Esophagus squamous epithelium (tissue), 5 donors: ENCODE measurements at regions of chr3 and their contacts with region 1.

Region 1: DNA sequence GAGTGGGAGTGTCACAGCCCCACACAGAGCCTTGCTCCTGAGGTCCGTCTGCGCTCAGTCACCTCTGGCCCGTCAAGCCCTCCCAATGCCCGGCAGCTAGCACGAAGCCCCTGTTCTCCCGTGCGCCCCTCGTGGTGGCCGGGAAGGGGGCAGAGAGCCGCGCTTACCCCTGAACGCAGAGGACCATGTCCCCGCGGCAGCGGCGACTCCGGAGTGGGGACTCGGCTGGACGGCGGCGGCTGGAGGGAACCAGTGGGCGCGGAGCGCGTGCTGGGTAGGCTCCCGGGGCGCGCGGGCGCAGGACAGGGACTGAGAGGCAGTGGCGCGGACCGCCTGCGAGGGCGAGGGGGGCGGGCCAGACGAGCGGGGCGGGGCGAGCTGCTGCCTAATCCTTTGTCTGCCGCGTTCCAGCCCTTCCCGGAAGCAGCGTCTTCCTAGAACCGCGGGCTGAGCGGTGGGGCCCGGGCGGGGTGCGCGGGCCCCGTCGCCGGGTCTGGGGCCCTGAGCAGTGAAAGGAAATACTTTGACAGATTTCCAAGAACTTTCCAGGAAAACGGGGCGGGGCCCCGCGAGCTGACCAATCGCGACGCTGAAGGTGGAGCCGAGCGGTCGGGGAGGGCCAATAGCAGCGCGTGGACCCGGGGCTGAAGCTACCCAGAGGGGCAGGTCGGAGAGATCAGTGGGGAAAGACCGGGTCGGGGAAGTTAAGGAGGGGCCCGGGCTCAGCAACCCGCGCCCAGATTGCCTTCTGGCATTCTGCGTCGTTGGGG is at the start of gene CISH:
- DNase-seq: peak; percentile 90
- H3K4me3 ChIP-seq: peak within 1 kb of the TSS; percentile 56 to 85 (median 76)
- H3K27ac ChIP-seq: peak within 1 kb of the TSS; percentile 83 to 93 (median 90)
- H3K4me1 ChIP-seq: peaks cover 21 to 88% (median 52%) of the 10 kb centered on the region in 3 donors
- H3K27me3 ChIP-seq: no peaks in the 10 kb centered on the region
- CTCF ChIP-seq: peak in 3 of 6 experiments; percentile 10 to 47 (median 30)
- POLR2A ChIP-seq: peak in 2 of 4 donors; percentile 61 to 88
- total RNA-seq, gene CISH: 3.1 to 11.1 (median 6.8) TPM

Region 2: DNA sequence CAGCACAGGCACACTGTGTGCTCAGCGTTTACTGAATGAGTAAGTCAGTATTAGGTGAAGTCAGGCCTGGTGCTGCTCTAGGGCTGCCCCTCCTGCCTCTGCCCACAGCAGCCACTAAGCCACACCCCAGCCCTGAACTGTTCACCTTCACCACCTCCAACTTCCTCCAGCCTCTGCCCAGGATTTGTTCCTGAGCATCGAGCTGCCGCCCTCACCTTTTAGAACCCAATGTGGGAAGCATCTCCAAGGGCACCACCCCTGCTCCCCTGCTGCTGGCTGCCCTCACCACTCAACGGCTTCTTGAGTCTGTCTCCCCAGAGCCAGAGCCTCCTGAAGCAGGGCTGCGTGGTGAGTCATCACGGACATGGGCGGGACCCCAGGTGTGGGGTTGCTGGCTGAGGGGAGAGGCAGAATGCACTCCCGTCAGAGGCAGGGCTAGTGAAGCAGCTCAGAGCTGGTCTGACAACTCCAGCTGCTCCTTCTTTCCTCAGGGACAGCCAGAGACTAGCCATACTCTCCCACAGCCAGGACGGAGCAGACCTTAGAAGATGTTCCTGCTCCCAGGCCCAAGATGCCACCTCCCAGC is 294.9 kb before region 1 on chr3:
- intact Hi-C with region 1: no loop called
- DNase-seq: no peak
- H3K4me3 ChIP-seq: peak overlapping the region in 2 of 4 donors; percentile 6 to 19
- H3K27ac ChIP-seq: peak overlapping the region; percentile 93 to 98 (median 96)
- H3K4me1 ChIP-seq: peaks cover 46 to 90% (median 51%) of the 10 kb centered on the region in 3 donors
- H3K27me3 ChIP-seq: no peaks in the 10 kb centered on the region
- CTCF ChIP-seq: peak in 1 of 6 experiments; percentile 16
- POLR2A ChIP-seq: peak in 3 of 4 donors; percentile 60 to 73 (median 64)

Region 3: DNA sequence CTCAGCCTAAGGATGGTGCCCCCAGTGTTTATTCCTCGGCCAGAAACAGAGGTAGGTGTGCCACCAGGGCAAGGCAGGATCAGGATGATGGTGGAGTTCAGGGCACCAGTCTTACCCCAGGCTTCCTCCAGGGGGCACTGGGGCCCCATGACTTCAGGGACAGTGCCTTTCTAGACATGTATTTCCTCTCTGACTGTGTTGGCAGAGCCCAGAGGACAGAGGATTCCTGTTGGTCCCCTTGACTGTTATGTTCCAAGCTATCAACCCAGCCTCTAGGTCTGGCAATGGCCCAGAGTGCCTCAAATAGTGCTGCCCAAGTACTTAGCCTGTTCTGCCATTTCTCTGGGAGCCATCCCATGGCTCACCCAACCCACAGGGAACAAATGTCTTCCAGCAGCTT is 39.5 kb before region 1 on chr3:
- intact Hi-C with region 1: loop called (anchors 2 kb)
- DNase-seq: no peak
- H3K4me3 ChIP-seq: no peak overlapping the region
- H3K27ac ChIP-seq: peak overlapping the region in 2 of 4 donors; percentile 36 to 48
- H3K4me1 ChIP-seq: peaks cover 9 to 81% (median 37%) of the 10 kb centered on the region in 3 donors
- H3K27me3 ChIP-seq: no peaks in the 10 kb centered on the region
- CTCF ChIP-seq: peak; percentile 77 to 96 (median 92)
- POLR2A ChIP-seq: no peak